ENCODE measurements at regions of chr1 and their contacts with region 1.

Region 1: GRCh38 chr1:26787706-26788514 is at the start of gene PIGV:
- DNase-seq: peak; percentile 91
- ATAC-seq: peak; percentile 50
- H3K4me3 Mint-ChIP-seq: peak within 1 kb of the TSS; percentile 97
- H3K27ac Mint-ChIP-seq: peak within 1 kb of the TSS; percentile 99
- H3K4me1 Mint-ChIP-seq: peaks cover 78% of the 10 kb centered on the region
- H3K27me3 Mint-ChIP-seq: no peaks in the 10 kb centered on the region
- CTCF ChIP-seq: no peak
- total RNA-seq, gene PIGV: 21.2 to 23.9 TPM

Region 2: DNA sequence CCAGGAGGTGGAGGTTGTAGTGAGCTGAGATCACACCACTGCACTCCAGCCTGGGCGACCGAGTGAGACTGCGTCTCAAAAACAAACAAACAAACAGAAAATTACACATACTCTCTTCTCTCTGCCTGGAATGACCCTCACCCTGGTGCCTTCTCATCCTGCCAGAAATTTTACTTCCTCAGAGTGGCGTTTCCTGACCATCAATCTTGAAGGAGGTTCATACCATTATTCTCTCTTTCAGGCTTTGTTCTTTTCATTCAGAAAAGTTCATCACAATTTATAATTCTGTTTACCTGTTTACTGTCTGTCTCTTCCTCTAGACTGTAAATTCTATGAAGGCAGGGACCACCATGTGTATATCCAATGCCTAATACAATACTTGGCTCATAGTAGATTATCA is 179.0 kb before region 1 on chr1:
- CTCF ChIA-PET with region 1: interaction called, 204 read pairs
- POLR2A ChIA-PET with region 1: interaction called, 27 read pairs
- intact Hi-C with region 1: no loop called
- DNase-seq: no peak
- ATAC-seq: no peak
- H3K4me3 Mint-ChIP-seq: no peak overlapping the region
- H3K27ac Mint-ChIP-seq: no peak overlapping the region
- H3K4me1 Mint-ChIP-seq: no peaks in the 10 kb centered on the region
- H3K27me3 Mint-ChIP-seq: no peaks in the 10 kb centered on the region
- CTCF ChIP-seq: no peak

Region 3: GRCh38 chr1:26695356-26696118 is 92.4 kb before region 1 on chr1 and contains the start of gene ARID1A:
- CTCF ChIA-PET with region 1: interaction called, 126 read pairs
- POLR2A ChIA-PET with region 1: interaction called, 283 read pairs
- intact Hi-C with region 1: loop called (anchors 5 kb)
- DNase-seq: peak; percentile 95
- ATAC-seq: peak; percentile 57
- H3K4me3 Mint-ChIP-seq: peak within 1 kb of the TSS; percentile 87
- H3K27ac Mint-ChIP-seq: peak within 1 kb of the TSS; percentile 98
- H3K4me1 Mint-ChIP-seq: peaks cover 22% of the 10 kb centered on the region
- H3K27me3 Mint-ChIP-seq: no peaks in the 10 kb centered on the region
- CTCF ChIP-seq: no peak
- total RNA-seq, gene ARID1A: 82.4 to 84.9 TPM

Region 4: DNA sequence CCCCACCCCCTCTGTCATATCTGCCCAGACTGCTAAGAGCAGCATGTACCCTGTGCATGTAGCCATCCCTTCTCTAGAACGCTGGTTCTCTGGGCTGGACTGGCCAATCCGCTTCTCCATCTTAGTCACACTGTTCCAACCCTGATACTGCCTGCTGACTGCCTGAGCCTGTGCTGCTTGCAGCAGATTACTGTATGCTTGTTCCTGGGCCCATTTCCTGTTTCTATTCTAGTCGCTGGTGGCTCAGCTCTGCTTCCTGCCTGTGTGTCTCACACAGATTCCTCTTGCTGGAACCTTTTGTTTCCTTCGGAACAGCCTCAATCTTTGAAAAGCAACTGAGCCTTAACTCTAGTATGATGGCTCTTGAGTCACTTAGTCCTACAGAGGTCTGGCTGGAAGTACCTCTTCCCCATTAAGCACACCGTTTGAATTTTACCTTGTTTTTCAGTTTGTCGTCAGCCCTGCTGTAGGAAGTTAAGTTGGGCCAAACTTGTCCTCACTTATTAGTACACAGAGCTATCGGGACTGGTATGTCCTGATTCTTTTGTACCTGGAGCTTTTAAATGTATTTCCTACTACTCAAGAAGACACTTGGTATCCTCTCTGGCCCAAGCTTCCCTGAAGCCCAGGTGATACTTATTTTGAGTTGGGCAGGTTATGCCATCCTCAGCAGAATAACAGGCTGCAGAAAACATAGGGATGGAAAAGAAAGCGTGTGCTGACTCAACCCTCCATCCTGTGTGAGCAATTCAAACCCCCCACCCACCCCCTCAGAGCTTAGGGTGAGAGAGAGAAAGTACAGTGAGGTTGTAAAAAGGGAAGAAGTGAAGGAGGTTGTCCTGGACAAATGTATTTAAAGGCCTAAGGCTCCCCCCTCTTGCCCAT is 43.6 kb before region 1 on chr1:
- CTCF ChIA-PET with region 1: interaction called, 70 read pairs
- POLR2A ChIA-PET with region 1: interaction called, 47 read pairs
- intact Hi-C with region 1: loop called (anchors 2 kb)
- DNase-seq: peak; percentile 92
- ATAC-seq: peak; percentile 95
- H3K4me3 Mint-ChIP-seq: peak overlapping the region; percentile 58
- H3K27ac Mint-ChIP-seq: peak overlapping the region; percentile 86
- H3K4me1 Mint-ChIP-seq: peaks cover 83% of the 10 kb centered on the region
- H3K27me3 Mint-ChIP-seq: no peaks in the 10 kb centered on the region
- CTCF ChIP-seq: no peak

Region 5: GRCh38 chr1:26799479-26800142 is 11.7 kb after region 1 on chr1:
- CTCF ChIA-PET with region 1: interaction called, 81 read pairs
- POLR2A ChIA-PET with region 1: interaction called, 69 read pairs
- intact Hi-C with region 1: no loop called
- DNase-seq: peak; percentile 62
- ATAC-seq: peak; percentile 80
- H3K4me3 Mint-ChIP-seq: peak overlapping the region; percentile 64
- H3K27ac Mint-ChIP-seq: peak overlapping the region; percentile 96
- H3K4me1 Mint-ChIP-seq: peaks cover 47% of the 10 kb centered on the region
- H3K27me3 Mint-ChIP-seq: no peaks in the 10 kb centered on the region
- CTCF ChIP-seq: no peak

Region 6: GRCh38 chr1:26864610-26865527 is 77.0 kb after region 1 on chr1:
- CTCF ChIA-PET with region 1: interaction called, 6 read pairs
- POLR2A ChIA-PET with region 1: interaction called, 10 read pairs
- intact Hi-C with region 1: no loop called
- DNase-seq: peak; percentile 95
- ATAC-seq: peak; percentile 94
- H3K4me3 Mint-ChIP-seq: peak overlapping the region; percentile 89
- H3K27ac Mint-ChIP-seq: peak overlapping the region; percentile 87
- H3K4me1 Mint-ChIP-seq: peaks cover 20% of the 10 kb centered on the region
- H3K27me3 Mint-ChIP-seq: no peaks in the 10 kb centered on the region
- CTCF ChIP-seq: no peak